ENCODE measurements at regions of chr20 and their contacts with region 1.

Region 1: DNA sequence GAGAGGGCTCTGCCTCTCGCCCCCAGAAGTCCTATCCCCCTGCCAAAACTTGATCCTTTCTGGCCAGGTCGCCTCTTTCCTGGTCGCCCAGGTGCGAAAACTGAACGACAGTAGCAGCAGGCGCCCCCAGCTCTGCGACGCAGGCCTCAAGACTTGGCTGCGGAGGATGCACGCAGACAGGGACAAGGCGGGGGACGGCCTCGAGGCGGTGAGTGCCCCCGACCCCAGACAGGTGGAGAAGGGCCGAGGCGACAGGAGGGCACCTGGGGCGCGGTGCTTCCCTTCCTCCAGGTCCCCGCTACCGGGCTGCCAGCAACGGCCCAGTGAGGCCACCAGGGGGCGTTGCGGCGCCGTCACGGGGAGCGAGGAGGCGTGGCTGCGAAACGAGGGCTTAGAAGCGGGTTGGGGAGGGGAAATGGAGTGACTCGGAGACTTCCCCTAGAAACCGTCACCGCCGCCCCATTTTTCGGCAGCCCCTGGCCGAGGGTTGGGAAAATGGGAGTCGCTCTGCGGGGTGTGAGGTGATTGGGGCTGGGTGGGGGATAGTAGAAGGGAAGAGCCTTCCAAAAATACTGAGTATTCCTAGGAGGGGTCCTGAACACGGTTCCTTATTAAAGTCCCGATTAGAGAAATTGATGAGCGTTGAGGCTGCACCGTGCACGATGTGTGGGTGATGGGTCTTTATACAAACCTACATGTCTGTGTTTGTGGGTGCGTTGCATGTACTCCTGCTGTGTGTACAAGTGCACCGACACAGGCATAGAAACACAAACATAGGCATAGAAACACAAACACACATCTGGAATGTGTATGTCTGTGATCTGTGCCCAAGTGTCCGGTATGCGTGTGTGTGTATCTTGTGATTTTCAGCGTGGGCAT is 44.6 kb downstream of the ARHGAP40 start:
- DNase-seq: peak; percentile 81 to 95 (median 90)
- ATAC-seq: peak; percentile 100
- H3K4me3 ChIP-seq: peak overlapping the region; percentile 24
- H3K4me3 Mint-ChIP-seq: peak overlapping the region; percentile 75
- H3K27ac ChIP-seq: no peak overlapping the region
- H3K27ac Mint-ChIP-seq: no peak overlapping the region
- H3K4me1 ChIP-seq: peaks cover 12% of the 10 kb centered on the region
- H3K4me1 Mint-ChIP-seq: peaks cover 8% of the 10 kb centered on the region
- H3K27me3 ChIP-seq: peaks cover 38 to 42% of the 10 kb centered on the region in 2 experiments
- H3K27me3 Mint-ChIP-seq: peaks cover 62% of the 10 kb centered on the region
- CTCF ChIP-seq: peak; percentile 93

Region 2: DNA sequence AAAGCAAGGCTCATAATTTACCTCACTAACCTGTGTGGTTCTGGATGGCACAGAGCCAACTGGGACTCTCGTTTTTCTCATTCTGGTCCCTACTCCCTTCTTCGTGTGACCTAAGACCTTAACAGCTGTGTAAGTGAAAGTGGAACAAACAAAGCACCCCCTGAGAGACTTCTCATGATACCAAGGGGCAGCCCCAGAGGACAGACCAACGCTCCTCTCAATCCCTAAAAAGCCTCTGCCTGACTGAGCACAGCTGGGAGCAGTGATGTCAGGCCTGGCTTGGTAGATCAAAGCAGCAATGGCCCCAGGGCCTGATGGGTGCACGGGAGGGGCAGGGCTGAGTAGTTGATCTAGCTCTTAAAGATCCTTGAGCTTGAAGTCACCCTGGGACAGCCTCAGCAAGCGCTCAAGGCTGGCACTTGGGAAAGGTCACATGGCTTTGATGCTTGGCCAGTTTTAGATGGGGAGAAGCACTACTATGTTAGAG is 465.0 kb before region 1 on chr20:
- CTCF ChIA-PET with region 1: no interaction called
- POLR2A ChIA-PET with region 1: no interaction called
- intact Hi-C with region 1: no loop called
- DNase-seq: no peak
- ATAC-seq: no peak
- H3K4me3 ChIP-seq: no peak overlapping the region
- H3K4me3 Mint-ChIP-seq: no peak overlapping the region
- H3K27ac ChIP-seq: no peak overlapping the region
- H3K27ac Mint-ChIP-seq: no peak overlapping the region
- H3K4me1 ChIP-seq: no peaks in the 10 kb centered on the region
- H3K4me1 Mint-ChIP-seq: no peaks in the 10 kb centered on the region
- H3K27me3 ChIP-seq: peaks cover 0 to 5% of the 10 kb centered on the region in 2 experiments
- H3K27me3 Mint-ChIP-seq: peaks cover 20% of the 10 kb centered on the region
- CTCF ChIP-seq: no peak

Region 3: DNA sequence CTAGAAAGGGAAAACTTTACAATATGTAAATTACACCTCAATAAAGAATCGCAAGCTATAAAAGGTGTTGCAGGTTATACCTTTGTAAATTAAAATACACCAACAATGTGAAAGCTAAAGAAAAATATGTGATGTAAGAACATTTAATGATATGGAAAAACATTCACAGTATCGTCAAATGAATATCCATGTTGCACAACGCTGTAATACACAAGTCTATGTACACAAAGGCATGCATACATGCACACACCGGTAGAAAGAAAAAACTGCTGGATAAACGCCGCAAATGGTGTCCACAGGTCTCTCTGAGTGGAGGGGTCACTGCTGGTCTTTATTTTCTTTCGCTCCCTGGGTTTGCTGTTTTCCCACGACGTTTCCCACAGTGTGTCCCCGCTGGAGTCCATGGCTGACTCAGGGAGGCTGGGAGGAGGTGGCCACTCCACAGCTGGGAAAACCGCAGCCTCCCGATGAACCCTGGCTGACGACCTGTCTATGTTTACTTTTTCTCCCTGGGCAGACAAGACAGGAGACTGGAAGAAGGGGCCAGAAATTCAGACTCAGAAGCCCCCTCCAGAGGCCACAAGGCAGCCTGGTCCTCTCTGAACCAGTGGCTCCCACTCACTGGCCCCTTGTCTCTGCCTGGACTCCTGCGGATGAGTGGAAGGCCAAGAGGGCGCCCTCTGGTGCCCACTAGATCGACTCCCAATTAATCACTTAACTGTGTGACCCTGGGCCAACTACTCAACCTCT is 355.2 kb before region 1 on chr20:
- CTCF ChIA-PET with region 1: no interaction called
- POLR2A ChIA-PET with region 1: no interaction called
- intact Hi-C with region 1: no loop called
- DNase-seq: no peak
- ATAC-seq: no peak
- H3K4me3 ChIP-seq: no peak overlapping the region
- H3K4me3 Mint-ChIP-seq: no peak overlapping the region
- H3K27ac ChIP-seq: no peak overlapping the region
- H3K27ac Mint-ChIP-seq: no peak overlapping the region
- H3K4me1 ChIP-seq: no peaks in the 10 kb centered on the region
- H3K4me1 Mint-ChIP-seq: no peaks in the 10 kb centered on the region
- H3K27me3 ChIP-seq: peaks cover 8 to 13% of the 10 kb centered on the region in 2 experiments
- H3K27me3 Mint-ChIP-seq: peaks cover 65% of the 10 kb centered on the region
- CTCF ChIP-seq: no peak

Region 4: GRCh38 chr20:38730989-38731737 is 84.9 kb after region 1 on chr20:
- CTCF ChIA-PET with region 1: no interaction called
- POLR2A ChIA-PET with region 1: no interaction called
- intact Hi-C with region 1: loop called (anchors 1 to 5 kb)
- DNase-seq: peak; percentile 64 to 89 (median 72)
- ATAC-seq: peak; percentile 80
- H3K4me3 ChIP-seq: peak overlapping the region; percentile 56
- H3K4me3 Mint-ChIP-seq: peak overlapping the region; percentile 82
- H3K27ac ChIP-seq: no peak overlapping the region
- H3K27ac Mint-ChIP-seq: peak overlapping the region; percentile 57
- H3K4me1 ChIP-seq: peaks cover 59% of the 10 kb centered on the region
- H3K4me1 Mint-ChIP-seq: peaks cover 53% of the 10 kb centered on the region
- H3K27me3 ChIP-seq: peaks cover 90 to 91% of the 10 kb centered on the region in 2 experiments
- H3K27me3 Mint-ChIP-seq: peaks cover 100% of the 10 kb centered on the region
- CTCF ChIP-seq: peak; percentile 99

Region 5: DNA sequence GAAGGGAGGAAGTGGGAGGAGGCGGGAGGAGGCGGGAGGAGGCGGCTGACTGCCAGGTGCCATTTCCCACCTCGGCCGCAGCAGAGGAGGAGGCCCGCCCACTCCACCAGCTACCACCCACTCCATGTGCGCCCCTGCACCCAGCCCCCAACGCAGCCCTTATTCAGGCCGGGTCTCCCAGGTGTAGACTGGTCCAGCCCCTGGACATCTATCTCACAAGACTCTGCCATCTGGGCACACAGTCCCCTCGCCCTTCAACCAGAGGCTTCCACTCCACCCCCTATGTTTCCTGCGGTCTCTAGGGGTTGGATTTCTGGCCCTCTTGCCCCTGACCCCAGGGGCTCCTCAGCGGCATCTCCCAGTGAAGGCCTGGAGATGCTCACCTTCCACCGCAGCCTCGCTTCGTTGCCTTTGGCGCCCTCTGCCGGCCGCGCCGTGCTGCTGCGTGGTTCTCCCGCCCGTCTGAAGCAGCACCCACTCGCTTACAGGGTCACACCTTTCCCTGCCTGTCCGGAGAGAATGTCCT is 247.4 kb after region 1 on chr20:
- CTCF ChIA-PET with region 1: no interaction called
- POLR2A ChIA-PET with region 1: no interaction called
- intact Hi-C with region 1: loop called (anchors 1 kb)
- DNase-seq: peak; percentile 61 to 90 (median 78)
- ATAC-seq: peak; percentile 88
- H3K4me3 ChIP-seq: peak overlapping the region; percentile 10
- H3K4me3 Mint-ChIP-seq: peak overlapping the region; percentile 5
- H3K27ac ChIP-seq: peak overlapping the region; percentile 15 to 59
- H3K27ac Mint-ChIP-seq: peak overlapping the region; percentile 77
- H3K4me1 ChIP-seq: peaks cover 24% of the 10 kb centered on the region
- H3K4me1 Mint-ChIP-seq: peaks cover 33% of the 10 kb centered on the region
- H3K27me3 ChIP-seq: no peaks in the 10 kb centered on the region
- H3K27me3 Mint-ChIP-seq: no peaks in the 10 kb centered on the region
- CTCF ChIP-seq: peak; percentile 96

Region 6: GRCh38 chr20:39049684-39050554 is 403.7 kb after region 1 on chr20:
- CTCF ChIA-PET with region 1: no interaction called
- POLR2A ChIA-PET with region 1: no interaction called
- intact Hi-C with region 1: loop called (anchors 1 kb)
- DNase-seq: peak; percentile 55 to 90 (median 76)
- ATAC-seq: peak; percentile 88
- H3K4me3 ChIP-seq: peak overlapping the region; percentile 79
- H3K4me3 Mint-ChIP-seq: peak overlapping the region; percentile 84
- H3K27ac ChIP-seq: peak overlapping the region in 1 of 2 donors; percentile 35
- H3K27ac Mint-ChIP-seq: peak overlapping the region; percentile 25
- H3K4me1 ChIP-seq: peaks cover 15% of the 10 kb centered on the region
- H3K4me1 Mint-ChIP-seq: peaks cover 11% of the 10 kb centered on the region
- H3K27me3 ChIP-seq: peaks cover 0 to 2% of the 10 kb centered on the region in 2 experiments
- H3K27me3 Mint-ChIP-seq: no peaks in the 10 kb centered on the region
- CTCF ChIP-seq: peak; percentile 99

Region 7: DNA sequence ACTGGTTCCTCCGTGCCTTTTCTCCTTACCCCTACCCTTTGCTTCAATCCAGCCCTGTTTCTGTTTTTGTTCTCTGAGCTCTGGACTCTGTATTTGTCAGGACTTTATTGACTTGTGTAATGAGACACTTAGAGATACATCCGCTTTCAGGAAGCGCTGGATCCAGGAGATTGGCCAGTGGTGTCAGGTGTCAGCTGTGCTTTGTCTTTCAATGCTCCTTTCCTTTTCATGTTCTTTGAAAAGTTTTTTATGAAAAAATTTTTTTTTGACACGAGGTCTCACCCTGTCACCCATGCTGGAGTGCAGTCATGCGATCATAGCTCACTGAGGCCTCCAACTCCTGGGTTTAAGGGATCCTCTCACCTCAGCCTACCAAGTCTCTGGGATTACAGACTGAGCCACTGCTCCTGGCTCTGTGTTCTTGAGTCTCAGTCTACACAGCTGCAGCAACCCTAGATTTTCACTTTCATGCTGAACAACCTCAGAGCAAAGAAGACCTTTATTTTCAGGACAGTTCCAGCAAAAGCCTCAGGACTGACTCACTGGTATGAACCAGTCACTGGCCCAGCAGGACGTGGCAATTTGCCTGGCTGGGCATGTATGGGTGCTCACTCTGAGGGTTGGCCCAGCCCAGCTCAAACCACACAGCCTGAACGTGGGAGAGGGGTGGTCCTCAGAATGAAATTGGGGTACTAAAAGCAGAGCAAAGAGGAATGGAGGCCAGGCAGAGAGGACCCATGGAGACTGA is 424.4 kb after region 1 on chr20:
- CTCF ChIA-PET with region 1: no interaction called
- POLR2A ChIA-PET with region 1: no interaction called
- intact Hi-C with region 1: no loop called
- DNase-seq: no peak
- ATAC-seq: no peak
- H3K4me3 ChIP-seq: no peak overlapping the region
- H3K4me3 Mint-ChIP-seq: no peak overlapping the region
- H3K27ac ChIP-seq: no peak overlapping the region
- H3K27ac Mint-ChIP-seq: no peak overlapping the region
- H3K4me1 ChIP-seq: no peaks in the 10 kb centered on the region
- H3K4me1 Mint-ChIP-seq: no peaks in the 10 kb centered on the region
- H3K27me3 ChIP-seq: peaks cover 7 to 9% of the 10 kb centered on the region in 2 experiments
- H3K27me3 Mint-ChIP-seq: peaks cover 38% of the 10 kb centered on the region
- CTCF ChIP-seq: no peak